A549 (cell line): ENCODE measurements at regions of chr2 and their contacts with region 1.

Region 1: GRCh38 chr2:3558205-3559014 is at the start of gene RNASEH1:
- DNase-seq: peak; percentile 99 to 100
- ATAC-seq: peak; percentile 99
- H3K4me3 ChIP-seq: peak within 1 kb of the TSS; percentile 94
- H3K27ac ChIP-seq: peak within 1 kb of the TSS; percentile 93 to 94
- H3K4me1 ChIP-seq: peaks cover 15% of the 10 kb centered on the region
- CTCF ChIP-seq: no peak
- EP300 ChIP-seq: no peak
- POLR2A ChIP-seq: peak; percentile 94
- RAD21 ChIP-seq: 0 out of 5 replicates have a peak, but pooled peaks of 1 of the 2 experiments have one; percentile 21
- polyA plus RNA-seq, gene RNASEH1: 39.7 and 54.3 TPM in 2 replicates

Region 2: DNA sequence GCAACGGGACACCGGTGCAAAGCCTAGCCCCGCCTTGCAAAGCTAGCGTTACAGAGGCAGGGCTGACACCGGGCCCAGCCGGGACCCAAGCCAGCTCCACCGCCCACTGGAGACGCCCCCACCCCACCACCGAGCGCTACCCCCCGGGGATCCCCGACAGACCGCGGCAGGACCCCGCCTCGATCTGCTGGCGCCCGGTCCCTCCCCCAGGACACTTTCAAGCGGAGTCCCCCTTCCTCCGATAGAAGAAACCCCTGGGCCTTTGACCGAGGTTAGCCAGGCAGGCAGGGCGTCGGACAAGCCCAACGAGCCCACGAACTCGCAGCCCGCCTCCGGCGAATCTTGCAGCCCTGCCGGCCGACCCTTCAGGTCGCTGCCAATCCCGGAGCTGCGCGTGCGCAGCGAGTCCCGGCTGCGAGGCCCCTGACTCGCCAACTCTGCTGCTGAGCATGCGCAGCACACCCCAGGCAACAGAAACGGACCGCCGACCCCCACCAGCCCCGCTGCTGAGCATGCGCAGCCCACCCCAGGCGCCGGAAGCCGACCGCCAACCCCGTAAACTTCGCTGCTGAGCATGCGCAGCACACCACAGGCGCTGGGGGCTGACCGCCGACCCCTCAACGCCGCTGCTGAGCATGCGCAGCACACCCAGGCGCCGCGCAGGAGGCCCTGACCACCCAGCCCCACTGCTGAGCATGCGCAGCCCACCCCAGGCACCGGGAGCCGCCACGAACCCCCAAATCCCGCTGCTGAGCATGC is 39.7 kb before region 1 on chr2:
- CTCF ChIA-PET with region 1: interaction called, 3 read pairs
- POLR2A ChIA-PET with region 1: interaction called, 14 read pairs
- DNase-seq: peak; percentile 99 to 100
- ATAC-seq: peak; percentile 81 to 92
- H3K4me3 ChIP-seq: peak overlapping the region; percentile 71
- H3K27ac ChIP-seq: peak overlapping the region; percentile 95 to 97
- H3K4me1 ChIP-seq: peaks cover 24% of the 10 kb centered on the region
- CTCF ChIP-seq: no peak
- EP300 ChIP-seq: no peak
- POLR2A ChIP-seq: peak; percentile 95
- RAD21 ChIP-seq: no peak

Region 3: DNA sequence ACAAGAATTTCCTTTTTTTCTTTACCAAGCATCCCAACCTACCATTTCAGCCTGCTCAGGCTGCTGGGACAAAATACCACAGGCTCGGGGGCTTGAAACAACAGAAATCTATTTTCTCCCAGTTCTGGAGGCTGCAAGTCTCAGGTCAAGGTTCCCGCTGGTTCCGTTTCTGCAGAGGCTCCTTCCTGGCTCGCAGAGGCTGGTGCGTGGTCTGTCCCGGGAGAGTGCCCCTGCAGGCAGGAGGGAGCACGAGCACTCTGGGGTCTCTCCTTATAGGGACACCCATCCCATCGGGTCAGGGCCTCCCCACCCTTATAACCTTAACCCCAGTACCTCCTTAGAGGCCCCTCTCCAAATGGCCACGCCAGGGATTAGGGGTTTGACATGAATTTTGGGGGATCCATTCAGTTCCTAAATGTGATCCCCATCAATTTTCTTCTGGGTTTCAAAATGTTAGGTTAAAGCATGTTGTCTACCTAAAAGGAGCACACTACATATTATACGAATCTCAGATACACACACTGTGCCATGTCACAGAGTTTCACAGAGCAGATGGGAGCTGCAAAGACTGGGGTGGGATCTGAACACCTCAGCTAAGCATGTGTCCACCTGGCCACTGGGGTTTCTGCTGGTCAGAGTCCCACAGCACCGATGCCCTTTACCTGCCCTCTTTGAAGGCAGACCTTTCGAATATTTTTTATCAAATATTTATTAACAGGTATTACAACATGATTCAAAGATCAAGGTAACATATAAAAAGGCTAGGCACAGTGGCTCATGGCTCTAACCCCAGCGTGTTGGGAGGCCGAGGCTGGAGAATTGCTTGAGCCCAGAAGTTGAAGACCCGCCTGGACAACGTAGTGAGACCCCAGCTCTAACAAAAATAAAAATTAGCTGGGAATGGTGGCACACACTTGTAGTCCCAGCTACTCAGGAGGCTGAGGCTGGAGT is 21.5 kb before region 1 on chr2:
- CTCF ChIA-PET with region 1: interaction called, 25 read pairs
- POLR2A ChIA-PET with region 1: interaction called, 12 read pairs
- DNase-seq: peak; percentile 72 to 81
- ATAC-seq: peak; percentile 87 to 92
- H3K4me3 ChIP-seq: peak overlapping the region; percentile 45
- H3K27ac ChIP-seq: peak overlapping the region; percentile 80 to 88
- H3K4me1 ChIP-seq: peaks cover 18% of the 10 kb centered on the region
- CTCF ChIP-seq: peak; percentile 43; the same call in 2 of the 3 replicates
- EP300 ChIP-seq: no peak
- POLR2A ChIP-seq: no peak
- RAD21 ChIP-seq: peak in 1 of 2 experiments; percentile 8; a peak in 1 of 5 replicates

Region 4: DNA sequence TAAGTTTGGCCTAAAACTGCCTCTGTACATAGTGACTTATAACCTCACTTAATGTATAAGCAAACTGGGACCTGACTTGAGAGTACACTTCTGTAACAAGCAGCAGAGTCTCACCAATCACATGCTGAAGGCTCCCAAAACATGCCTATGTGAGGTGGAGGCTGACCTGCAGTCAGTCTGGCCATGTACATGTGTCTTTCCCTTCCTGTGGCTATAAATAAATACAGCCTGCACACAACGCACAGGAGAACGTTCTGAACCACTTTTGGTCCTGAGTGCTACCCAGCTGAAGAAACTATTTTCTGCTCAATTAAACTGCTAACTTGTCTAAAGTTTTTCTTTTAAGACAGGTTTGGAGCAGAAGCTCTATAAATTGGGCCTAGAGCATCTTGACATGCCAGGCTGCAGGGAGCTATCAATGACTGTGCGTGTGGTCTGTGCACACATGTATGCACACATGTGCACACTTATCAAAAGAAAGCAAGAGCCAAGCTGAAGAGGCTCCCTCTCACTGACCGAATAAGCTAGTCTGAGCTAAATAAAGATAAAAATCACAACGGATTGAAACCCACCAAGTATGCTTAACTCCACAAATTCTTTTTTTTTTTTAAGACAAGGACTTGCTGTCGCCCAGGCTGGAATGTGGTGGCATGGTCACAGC is 15.3 kb before region 1 on chr2:
- CTCF ChIA-PET with region 1: interaction called, 25 read pairs
- POLR2A ChIA-PET with region 1: interaction called, 13 read pairs
- DNase-seq: no peak
- ATAC-seq: no peak
- H3K4me3 ChIP-seq: no peak overlapping the region
- H3K27ac ChIP-seq: no peak overlapping the region
- H3K4me1 ChIP-seq: no peaks in the 10 kb centered on the region
- CTCF ChIP-seq: no peak
- EP300 ChIP-seq: no peak
- POLR2A ChIP-seq: no peak
- RAD21 ChIP-seq: no peak

Region 5: DNA sequence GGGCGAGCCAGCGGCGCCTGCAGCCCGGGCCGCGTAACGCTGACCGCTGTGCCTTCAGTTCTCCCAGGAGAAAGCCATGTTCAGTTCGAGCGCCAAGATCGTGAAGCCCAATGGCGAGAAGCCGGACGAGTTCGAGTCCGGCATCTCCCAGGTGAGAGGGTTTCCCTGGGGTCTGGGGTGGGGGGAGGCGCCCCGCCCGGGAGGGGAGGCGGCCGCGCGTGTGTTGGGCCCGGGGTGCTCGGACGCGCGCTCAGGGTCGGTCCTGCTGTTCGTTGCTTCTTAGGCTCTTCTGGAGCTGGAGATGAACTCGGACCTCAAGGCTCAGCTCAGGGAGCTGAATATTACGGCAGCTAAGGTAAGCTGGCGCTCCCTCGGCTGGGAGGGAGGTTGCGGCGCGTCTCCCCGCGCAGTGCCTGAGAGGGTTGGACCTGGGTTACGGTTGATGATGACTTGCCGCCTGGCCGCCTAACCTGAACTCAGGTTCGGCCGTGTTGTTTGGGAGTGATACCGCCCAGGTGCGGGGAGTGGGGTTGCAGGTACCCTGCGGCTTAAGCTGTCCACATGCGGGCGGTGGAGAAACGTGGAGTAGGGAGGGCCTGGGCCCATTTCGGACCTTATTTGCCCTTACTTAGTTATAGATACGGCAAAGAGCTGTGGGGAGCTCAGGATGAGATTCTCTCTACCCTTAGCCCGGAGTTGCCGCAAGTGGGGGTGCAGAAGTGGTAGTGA is 17.3 kb after region 1 on chr2:
- CTCF ChIA-PET with region 1: interaction called, 3 read pairs
- POLR2A ChIA-PET with region 1: interaction called, 62 read pairs
- DNase-seq: peak in 1 of 2 experiments; percentile 23
- ATAC-seq: peak; percentile 27 to 70
- H3K4me3 ChIP-seq: peak overlapping the region; percentile 91
- H3K27ac ChIP-seq: peak overlapping the region; percentile 94 to 99
- H3K4me1 ChIP-seq: peaks cover 49% of the 10 kb centered on the region
- CTCF ChIP-seq: no peak
- EP300 ChIP-seq: no peak
- POLR2A ChIP-seq: no peak
- RAD21 ChIP-seq: no peak

Region 6: GRCh38 chr2:3585261-3586109 is 27.1 kb after region 1 on chr2:
- CTCF ChIA-PET with region 1: interaction called, 3 read pairs
- POLR2A ChIA-PET with region 1: interaction called, 10 read pairs
- DNase-seq: peak in 1 of 2 experiments; percentile 58
- ATAC-seq: peak; percentile 45 to 53
- H3K4me3 ChIP-seq: no peak overlapping the region
- H3K27ac ChIP-seq: peak overlapping the region; percentile 33 to 66; a peak in 5 of 6 replicates
- H3K4me1 ChIP-seq: peaks cover 42% of the 10 kb centered on the region
- CTCF ChIP-seq: no peak
- EP300 ChIP-seq: no peak
- POLR2A ChIP-seq: no peak
- RAD21 ChIP-seq: no peak

Region 7: DNA sequence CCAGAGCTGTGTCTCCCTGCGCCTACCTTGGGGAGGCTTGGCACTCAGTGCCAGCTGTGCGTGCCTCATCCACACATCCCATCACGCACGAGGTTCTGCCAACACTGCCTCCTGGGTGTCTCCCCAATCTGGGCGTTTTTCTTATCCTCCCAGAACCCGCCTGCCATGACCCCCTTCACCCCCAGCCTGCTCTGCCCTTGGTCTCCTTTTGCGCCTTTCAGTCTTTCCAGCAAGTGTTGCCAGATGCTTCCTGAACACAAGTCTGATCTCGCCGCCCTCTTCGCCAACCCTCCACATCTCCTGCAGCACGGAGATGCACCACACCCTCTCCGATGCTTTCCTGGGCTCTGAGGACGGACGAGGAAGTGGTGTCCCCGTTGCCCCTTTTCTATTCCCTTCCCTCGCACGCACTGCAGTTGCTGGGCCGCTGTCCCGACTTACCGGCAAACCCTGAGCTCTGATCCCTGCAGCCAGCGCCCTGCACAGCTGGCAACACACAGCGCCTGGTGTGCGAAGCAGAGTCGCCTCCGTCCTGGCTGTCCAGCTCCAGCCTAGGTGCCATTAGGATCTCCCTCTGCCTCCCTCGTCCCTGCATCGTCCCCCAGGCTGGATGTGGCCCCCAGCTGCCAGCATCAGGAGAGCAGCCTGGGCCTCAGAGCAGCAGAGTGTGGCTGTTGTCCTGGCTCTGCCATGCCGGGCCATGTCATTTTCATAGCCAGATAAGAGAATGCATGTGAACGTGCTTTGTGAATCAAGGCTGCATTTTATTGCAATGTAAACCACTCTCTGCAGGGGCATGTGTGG is 77.0 kb after region 1 on chr2:
- CTCF ChIA-PET with region 1: no interaction called
- POLR2A ChIA-PET with region 1: no interaction called
- DNase-seq: no peak
- ATAC-seq: peak; percentile 4 to 17; a peak in 2 of 6 replicates
- H3K4me3 ChIP-seq: no peak overlapping the region
- H3K27ac ChIP-seq: no peak overlapping the region
- H3K4me1 ChIP-seq: no peaks in the 10 kb centered on the region
- CTCF ChIP-seq: no peak
- EP300 ChIP-seq: no peak
- POLR2A ChIP-seq: no peak
- RAD21 ChIP-seq: no peak